Activated T-helper 1 cell treated with anti-CD3 and anti-CD28 coated beads, Interleukin-12 subunit alpha, Interleukin-12 subunit beta, Interleukin-2, Interleukin-4 antibody, amounts not matched to agents 30 ng/mL and 10 ng/mL and 1 ng/mL, durations not matched to agents 14 hours and 24 hours and 36 hours (primary cell): ENCODE measurements at regions of chr5 and their contacts with region 1.

Region 1: DNA sequence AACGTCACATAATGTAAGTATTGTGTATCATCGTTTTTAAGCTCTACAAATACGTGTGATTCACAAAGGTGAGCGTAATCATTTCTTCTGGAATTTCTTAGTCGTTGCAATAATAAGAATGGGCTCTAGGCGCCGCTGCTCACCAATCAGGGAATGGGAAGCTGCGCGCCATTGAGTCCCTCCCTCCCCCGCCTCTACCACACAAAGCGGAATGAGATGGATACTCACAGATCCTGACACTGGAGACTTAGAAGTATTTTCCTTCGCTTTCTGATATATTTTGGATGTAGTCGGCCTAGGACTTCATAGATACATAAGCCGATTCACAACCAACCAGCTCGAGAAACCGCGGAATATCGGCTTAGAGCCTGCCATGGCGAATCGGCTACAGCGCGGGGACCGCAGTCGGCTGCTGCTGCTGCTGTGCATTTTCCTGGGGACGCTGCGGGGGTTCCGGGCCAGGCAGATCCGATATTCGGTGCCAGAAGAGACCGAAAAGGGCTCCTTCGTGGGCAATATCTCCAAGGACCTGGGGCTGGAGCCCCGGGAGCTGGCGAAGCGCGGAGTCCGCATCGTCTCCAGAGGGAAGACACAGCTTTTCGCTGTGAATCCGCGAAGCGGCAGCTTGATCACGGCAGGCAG is at the start of gene PCDHGA11:
- DNase-seq: peak; percentile 23
- H3K4me3 Mint-ChIP-seq: peak within 1 kb of the TSS; percentile 86
- H3K27ac Mint-ChIP-seq: peak within 1 kb of the TSS; percentile 55
- H3K4me1 Mint-ChIP-seq: peaks cover 14% of the 10 kb centered on the region
- H3K27me3 Mint-ChIP-seq: peaks cover 49% of the 10 kb centered on the region
- total RNA-seq, gene PCDHGA11: 0.16 and 0.24 TPM in 2 replicates

Region 2: DNA sequence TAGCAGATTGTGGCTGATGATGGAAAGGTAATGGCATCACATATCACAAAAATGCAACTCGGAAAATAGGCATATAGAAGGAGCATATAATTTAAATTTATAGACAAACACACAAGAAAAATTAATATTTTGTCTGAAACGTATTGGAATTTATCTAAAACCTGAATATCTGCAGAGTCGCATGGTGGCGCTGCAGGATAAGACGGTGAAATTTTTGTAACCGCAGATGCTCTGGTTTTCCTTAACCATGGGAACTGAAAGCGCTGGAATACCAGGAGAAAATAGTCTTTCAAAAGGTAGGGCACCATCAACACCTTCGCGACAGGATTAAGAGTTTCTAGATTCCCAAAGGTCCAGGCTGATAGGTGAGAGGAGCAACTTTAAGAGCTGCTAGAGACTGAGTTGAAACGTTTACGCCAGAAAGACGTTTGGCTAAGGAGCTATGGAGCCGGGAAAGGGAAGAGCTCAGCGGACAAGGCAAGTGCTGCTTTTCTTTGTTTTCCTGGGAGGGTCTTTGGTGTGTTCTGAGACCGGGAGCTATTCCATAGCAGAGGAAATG is 186.8 kb before region 1 on chr5:
- intact Hi-C with region 1: loop called (anchors 5 kb)
- DNase-seq: no peak
- H3K4me3 Mint-ChIP-seq: no peak overlapping the region
- H3K27ac Mint-ChIP-seq: no peak overlapping the region
- H3K4me1 Mint-ChIP-seq: no peaks in the 10 kb centered on the region
- H3K27me3 Mint-ChIP-seq: peaks cover 3% of the 10 kb centered on the region

Region 3: DNA sequence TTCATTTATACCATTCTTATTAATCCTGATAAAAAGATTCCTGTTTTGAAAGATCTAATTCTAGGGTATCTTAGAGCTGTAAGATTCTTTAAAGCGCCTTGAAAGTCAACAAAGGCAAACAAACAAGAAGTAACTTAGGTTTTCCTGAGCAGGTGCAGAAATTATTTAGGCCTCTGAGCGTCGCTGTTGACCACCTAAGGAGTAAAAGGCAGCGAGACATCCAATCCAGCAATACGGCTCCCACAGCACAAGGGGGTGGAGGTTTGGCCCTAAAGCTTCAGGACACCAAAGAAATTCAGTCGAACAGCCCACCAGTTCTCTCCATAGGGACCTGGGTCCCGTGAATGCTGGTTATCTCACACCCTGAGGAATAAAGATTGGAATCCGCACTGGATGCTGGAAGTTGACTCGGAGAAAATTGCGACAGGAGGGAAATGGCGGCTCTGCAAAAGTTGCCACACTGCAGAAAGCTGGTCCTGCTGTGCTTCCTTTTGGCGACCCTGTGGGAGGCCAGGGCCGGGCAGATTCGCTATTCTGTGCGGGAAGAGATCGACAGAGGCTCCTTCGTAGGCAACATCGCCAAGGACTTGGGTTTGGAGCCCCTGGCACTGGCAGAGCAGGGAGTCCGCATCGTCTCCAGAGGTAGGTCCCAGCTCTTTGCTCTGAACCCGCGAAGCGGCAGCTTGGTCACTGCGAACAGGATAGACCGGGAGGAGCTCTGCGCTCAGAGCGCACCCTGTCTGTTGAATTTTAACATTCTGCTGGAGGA is 82.3 kb before region 1 on chr5 and contains the start of gene PCDHGA2:
- intact Hi-C with region 1: loop called (anchors 5 kb)
- DNase-seq: no peak
- H3K4me3 Mint-ChIP-seq: peak within 1 kb of the TSS; percentile 64
- H3K27ac Mint-ChIP-seq: peak within 1 kb of the TSS; percentile 15
- H3K4me1 Mint-ChIP-seq: no peaks in the 10 kb centered on the region
- H3K27me3 Mint-ChIP-seq: peaks cover 39% of the 10 kb centered on the region
- total RNA-seq, gene PCDHGA2: 0.08 and 0.17 TPM in 2 replicates

Region 4: DNA sequence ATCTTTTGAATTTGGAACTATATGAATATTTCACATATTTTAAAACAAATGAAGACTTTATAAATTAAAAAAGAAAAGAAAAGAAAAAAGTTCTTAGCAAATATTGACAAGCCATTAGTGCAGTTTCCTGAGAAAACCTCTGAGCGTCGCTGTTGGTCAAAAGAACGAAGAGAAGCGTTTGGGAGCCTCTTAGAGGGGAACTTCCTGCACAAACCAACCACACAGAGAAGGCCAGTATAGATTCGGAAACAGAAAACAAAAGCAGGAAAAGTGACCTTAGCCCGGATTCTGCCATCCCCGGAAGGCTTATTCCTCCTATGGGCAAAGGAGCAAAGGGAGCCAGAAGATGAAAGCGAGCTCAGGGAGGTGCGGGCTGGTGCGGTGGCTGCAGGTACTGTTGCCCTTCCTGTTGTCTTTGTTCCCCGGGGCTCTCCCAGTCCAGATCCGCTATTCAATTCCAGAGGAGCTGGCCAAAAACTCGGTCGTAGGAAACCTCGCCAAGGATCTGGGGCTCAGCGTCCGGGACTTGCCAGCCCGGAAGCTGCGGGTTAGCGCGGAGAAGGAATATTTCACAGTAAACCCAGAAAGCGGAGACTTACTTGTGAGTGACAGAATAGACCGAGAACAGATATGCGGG is 61.1 kb before region 1 on chr5 and contains the start of gene PCDHGB2:
- intact Hi-C with region 1: loop called (anchors 5 kb)
- DNase-seq: no peak
- H3K4me3 Mint-ChIP-seq: peak within 1 kb of the TSS; percentile 85
- H3K27ac Mint-ChIP-seq: peak within 1 kb of the TSS; percentile 68
- H3K4me1 Mint-ChIP-seq: peaks cover 6% of the 10 kb centered on the region
- H3K27me3 Mint-ChIP-seq: peaks cover 19% of the 10 kb centered on the region
- total RNA-seq, gene PCDHGB2: 0.47 and 0.93 TPM in 2 replicates

Region 5: GRCh38 chr5:141387233-141387949 is 33.6 kb before region 1 on chr5 and contains the start of gene PCDHGB4:
- intact Hi-C with region 1: loop called (anchors 5 kb)
- DNase-seq: no peak
- H3K4me3 Mint-ChIP-seq: peak within 1 kb of the TSS; percentile 39
- H3K27ac Mint-ChIP-seq: no peak within 1 kb of the TSS
- H3K4me1 Mint-ChIP-seq: no peaks in the 10 kb centered on the region
- H3K27me3 Mint-ChIP-seq: peaks cover 3% of the 10 kb centered on the region
- total RNA-seq, gene PCDHGB4: 0.18 and 0.27 TPM in 2 replicates

Region 6: DNA sequence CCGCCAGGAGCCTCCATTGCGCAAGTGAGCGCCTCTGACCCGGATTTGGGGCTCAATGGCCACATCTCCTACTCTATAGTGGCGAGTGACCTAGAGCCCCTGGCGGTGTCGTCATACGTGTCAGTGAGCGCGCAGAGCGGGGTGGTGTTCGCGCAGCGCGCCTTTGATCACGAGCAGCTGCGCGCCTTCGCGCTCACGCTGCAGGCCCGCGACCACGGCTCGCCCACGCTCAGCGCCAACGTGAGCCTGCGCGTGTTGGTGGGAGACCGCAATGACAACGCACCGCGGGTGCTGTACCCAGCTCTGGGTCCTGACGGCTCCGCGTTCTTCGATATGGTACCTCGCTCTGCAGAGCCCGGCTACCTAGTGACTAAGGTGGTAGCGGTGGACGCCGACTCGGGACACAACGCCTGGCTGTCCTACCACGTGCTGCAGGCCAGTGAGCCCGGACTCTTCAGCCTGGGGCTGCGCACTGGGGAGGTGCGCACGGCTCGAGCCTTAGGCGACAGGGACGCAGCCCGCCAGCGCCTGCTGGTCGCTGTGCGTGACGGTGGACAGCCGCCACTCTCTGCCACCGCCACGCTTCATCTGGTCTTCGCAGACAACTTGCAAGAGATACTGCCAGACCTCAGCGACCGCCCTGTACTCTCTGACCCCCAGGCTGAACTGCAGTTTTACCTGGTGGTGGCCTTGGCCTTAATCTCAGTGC is 11.2 kb before region 1 on chr5:
- intact Hi-C with region 1: no loop called
- DNase-seq: no peak
- H3K4me3 Mint-ChIP-seq: no peak overlapping the region
- H3K27ac Mint-ChIP-seq: no peak overlapping the region
- H3K4me1 Mint-ChIP-seq: peaks cover 7% of the 10 kb centered on the region
- H3K27me3 Mint-ChIP-seq: peaks cover 38% of the 10 kb centered on the region

Region 7: GRCh38 chr5:141475625-141476131 is 54.7 kb after region 1 on chr5 and contains the start of gene PCDHGC3:
- intact Hi-C with region 1: loop called (anchors 5 kb)
- DNase-seq: peak; percentile 13
- H3K4me3 Mint-ChIP-seq: peak within 1 kb of the TSS; percentile 90
- H3K27ac Mint-ChIP-seq: no peak within 1 kb of the TSS
- H3K4me1 Mint-ChIP-seq: peaks cover 16% of the 10 kb centered on the region
- H3K27me3 Mint-ChIP-seq: peaks cover 53% of the 10 kb centered on the region
- total RNA-seq, gene PCDHGC3: 0.31 and 0.32 TPM in 2 replicates